Endothelial cell of umbilical vein (primary cell): ENCODE measurements at regions of chr19 and their contacts with region 1.

Region 1: GRCh38 chr19:52336117-52336790 is at the start of gene ZNF610:
- DNase-seq: peak; percentile 85
- H3K4me3 ChIP-seq: peak within 1 kb of the TSS; percentile 73 to 89 (median 89)
- H3K27ac ChIP-seq: peak within 1 kb of the TSS; percentile 57
- H3K4me1 ChIP-seq: peaks cover 6% of the 10 kb centered on the region
- H3K27me3 ChIP-seq: no peaks in the 10 kb centered on the region
- CTCF ChIP-seq: no peak
- POLR2A ChIP-seq: peak; percentile 64
- total RNA-seq, gene ZNF610: 0.97 and 1.1 TPM in 2 replicates

Region 2: DNA sequence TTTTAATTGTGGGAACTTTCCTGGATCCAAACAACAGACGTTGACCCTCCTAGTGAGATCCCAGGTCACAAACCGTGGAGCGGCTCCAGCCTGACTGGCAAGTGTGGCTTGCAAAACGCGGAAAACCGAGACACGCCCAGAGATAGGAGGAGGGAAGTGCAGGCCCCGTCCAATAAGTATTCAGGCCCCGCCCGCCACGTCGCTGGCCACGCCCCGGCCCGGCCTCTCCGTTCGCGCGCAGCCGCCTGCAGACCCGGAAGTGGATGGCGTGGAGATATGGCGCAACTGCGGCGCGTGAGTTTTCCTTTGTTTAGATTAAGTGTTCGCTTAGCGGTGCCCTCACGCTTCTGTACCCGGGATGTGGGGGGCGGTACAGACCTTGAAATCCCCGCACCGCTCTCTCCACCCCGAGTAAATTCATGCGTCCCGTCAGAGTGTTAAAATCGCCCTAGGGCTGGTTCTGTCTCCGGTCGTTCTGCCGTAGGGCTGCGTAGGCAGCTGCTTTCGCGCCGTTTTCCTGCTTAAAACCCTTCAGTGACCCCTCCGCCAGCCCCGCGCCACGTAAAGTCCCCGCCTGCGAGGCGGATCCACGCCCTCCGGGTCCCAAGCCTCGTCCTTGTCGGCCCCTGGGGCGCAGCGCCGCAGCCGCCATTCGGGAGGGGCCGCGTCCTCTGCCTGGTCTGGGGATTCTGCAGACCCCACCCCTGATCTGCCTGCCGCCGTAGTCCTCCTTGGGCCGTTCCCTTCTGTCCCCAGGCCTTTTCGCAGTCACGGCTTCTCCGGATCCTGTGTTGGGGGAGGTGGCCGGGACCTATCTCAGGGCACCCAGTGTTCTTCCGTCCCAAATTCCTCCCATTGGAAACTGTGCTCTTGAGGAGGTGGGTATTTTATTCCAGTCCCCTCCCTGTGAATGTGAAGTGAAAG is 66.7 kb before region 1 on chr19 and contains the start of gene ZNF766:
- CTCF ChIA-PET with region 1: no interaction called
- POLR2A ChIA-PET with region 1: no interaction called
- dilution Hi-C with region 1: no loop called
- intact Hi-C with region 1: loop called (anchors 1 kb)
- DNase-seq: peak; percentile 95
- H3K4me3 ChIP-seq: peak within 1 kb of the TSS; percentile 89 to 96 (median 94)
- H3K27ac ChIP-seq: peak within 1 kb of the TSS; percentile 96
- H3K4me1 ChIP-seq: peaks cover 6% of the 10 kb centered on the region
- H3K27me3 ChIP-seq: no peaks in the 10 kb centered on the region
- CTCF ChIP-seq: no peak
- POLR2A ChIP-seq: peak; percentile 89
- total RNA-seq, gene ZNF766: 8.9 and 9.1 TPM in 2 replicates

Region 3: DNA sequence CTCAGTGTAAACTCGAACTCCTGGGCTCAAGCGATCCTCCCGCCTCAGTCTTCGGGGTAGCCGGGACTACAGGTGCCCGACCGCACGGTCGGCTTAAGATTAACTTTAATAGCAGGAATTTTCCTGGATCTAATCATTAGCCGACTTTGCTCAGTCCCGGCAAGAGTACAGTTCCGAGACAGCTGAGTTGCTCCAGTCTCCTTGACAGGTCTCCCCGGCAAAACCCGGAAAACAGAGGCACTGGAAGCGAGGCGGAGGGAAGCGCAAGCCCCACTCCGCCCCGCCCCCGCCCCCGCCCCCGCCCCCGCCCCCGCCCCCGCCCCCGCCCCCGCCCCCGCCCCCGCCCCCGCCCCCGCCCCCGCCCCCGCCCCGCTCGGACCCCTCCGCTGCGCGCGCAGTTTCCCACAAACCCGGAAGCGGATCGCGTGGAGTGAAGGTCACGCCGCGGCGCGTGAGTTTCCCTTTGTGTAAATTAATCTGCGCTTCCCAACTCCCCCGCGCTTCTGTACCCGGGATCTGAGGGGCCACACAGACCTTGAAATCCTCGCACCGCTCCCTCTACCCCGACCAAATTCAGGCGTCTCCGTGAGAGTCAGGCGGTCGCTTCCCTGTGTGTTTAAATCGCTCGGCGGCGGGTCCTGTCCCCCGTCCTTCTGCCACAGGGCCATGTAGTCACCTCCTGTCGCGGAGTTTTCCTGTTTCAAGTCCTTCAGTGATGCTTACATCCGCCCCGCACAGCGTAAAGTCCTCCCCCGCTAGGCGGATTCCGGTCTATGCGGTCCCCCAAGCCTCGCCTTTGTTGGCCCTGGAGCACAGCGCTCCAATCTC is 39.3 kb before region 1 on chr19 and contains the start of gene ZNF480:
- CTCF ChIA-PET with region 1: no interaction called
- POLR2A ChIA-PET with region 1: no interaction called
- dilution Hi-C with region 1: no loop called
- intact Hi-C with region 1: loop called (anchors 2 kb)
- DNase-seq: peak; percentile 75
- H3K4me3 ChIP-seq: peak within 1 kb of the TSS; percentile 64 to 97 (median 97)
- H3K27ac ChIP-seq: peak within 1 kb of the TSS; percentile 97
- H3K4me1 ChIP-seq: peaks cover 4% of the 10 kb centered on the region
- H3K27me3 ChIP-seq: no peaks in the 10 kb centered on the region
- CTCF ChIP-seq: peak in 1 of 2 donors; percentile 14
- POLR2A ChIP-seq: peak; percentile 83
- total RNA-seq, gene ZNF480: 9.2 and 10.0 TPM in 2 replicates

Region 4: GRCh38 chr19:52322429-52322828 is 13.8 kb before region 1 on chr19:
- CTCF ChIA-PET with region 1: no interaction called
- POLR2A ChIA-PET with region 1: no interaction called
- dilution Hi-C with region 1: no loop called
- intact Hi-C with region 1: no loop called
- DNase-seq: no peak
- H3K4me3 ChIP-seq: no peak overlapping the region
- H3K27ac ChIP-seq: no peak overlapping the region
- H3K4me1 ChIP-seq: no peaks in the 10 kb centered on the region
- H3K27me3 ChIP-seq: no peaks in the 10 kb centered on the region
- CTCF ChIP-seq: no peak
- POLR2A ChIP-seq: no peak

Region 5: GRCh38 chr19:52397310-52398080 is 61.2 kb after region 1 on chr19 and contains the start of gene ZNF528:
- CTCF ChIA-PET with region 1: no interaction called
- POLR2A ChIA-PET with region 1: no interaction called
- dilution Hi-C with region 1: no loop called
- intact Hi-C with region 1: loop called (anchors 5 kb)
- DNase-seq: peak; percentile 92
- H3K4me3 ChIP-seq: peak within 1 kb of the TSS; percentile 14 to 73 (median 49)
- H3K27ac ChIP-seq: peak within 1 kb of the TSS; percentile 42
- H3K4me1 ChIP-seq: no peaks in the 10 kb centered on the region
- H3K27me3 ChIP-seq: no peaks in the 10 kb centered on the region
- CTCF ChIP-seq: no peak
- POLR2A ChIP-seq: peak; percentile 84
- total RNA-seq, gene ZNF528: 11.3 and 16.1 TPM in 2 replicates